CD4-positive, alpha-beta memory T cell (primary cell): ENCODE measurements at regions of chr12 and their contacts with region 1.

Region 1: GRCh38 chr12:110012137-110012536 is 12.9 kb downstream of the ANKRD13A start:
- DNase-seq: peak in 4 of 5 donors; percentile 35 to 81 (median 44)
- H3K4me3 ChIP-seq: no peak overlapping the region
- H3K4me3 Mint-ChIP-seq: peak overlapping the region; percentile 2 to 89 (median 72)
- H3K27ac ChIP-seq: peak overlapping the region; percentile 43
- H3K27ac Mint-ChIP-seq: peak overlapping the region; percentile 79 to 97 (median 94)
- H3K4me1 ChIP-seq: peaks cover 68% of the 10 kb centered on the region
- H3K4me1 Mint-ChIP-seq: peaks cover 44 to 69% (median 56%) of the 10 kb centered on the region in 4 donors
- H3K27me3 ChIP-seq: no peaks in the 10 kb centered on the region
- H3K27me3 Mint-ChIP-seq: no peaks in the 10 kb centered on the region

Region 2: GRCh38 chr12:109899783-109900751 is 112.1 kb before region 1 on chr12 and contains the start of gene TCHP:
- CTCF ChIA-PET with region 1: no interaction called
- POLR2A ChIA-PET with region 1: no interaction called
- intact Hi-C with region 1: loop called (anchors 1 kb)
- DNase-seq: peak; percentile 76 to 83 (median 80)
- H3K4me3 ChIP-seq: peak within 1 kb of the TSS; percentile 72 to 87
- H3K4me3 Mint-ChIP-seq: peak within 1 kb of the TSS; percentile 90 to 99 (median 94)
- H3K27ac ChIP-seq: peak within 1 kb of the TSS; percentile 70
- H3K27ac Mint-ChIP-seq: peak within 1 kb of the TSS; percentile 85 to 99 (median 97)
- H3K4me1 ChIP-seq: peaks cover 22% of the 10 kb centered on the region
- H3K4me1 Mint-ChIP-seq: peaks cover 14 to 37% (median 23%) of the 10 kb centered on the region in 4 donors
- H3K27me3 ChIP-seq: no peaks in the 10 kb centered on the region
- H3K27me3 Mint-ChIP-seq: no peaks in the 10 kb centered on the region
- total RNA-seq, gene TCHP: 41.4 to 45.0 TPM

Region 3: GRCh38 chr12:109934026-109934425 is 78.1 kb before region 1 on chr12:
- CTCF ChIA-PET with region 1: interaction called, 4 read pairs
- POLR2A ChIA-PET with region 1: no interaction called
- intact Hi-C with region 1: loop called (anchors 1 kb)
- DNase-seq: peak in 2 of 5 donors; percentile 8 to 12
- H3K4me3 ChIP-seq: no peak overlapping the region
- H3K4me3 Mint-ChIP-seq: no peak overlapping the region
- H3K27ac ChIP-seq: no peak overlapping the region
- H3K27ac Mint-ChIP-seq: peak overlapping the region in 4 of 7 donors; percentile 27 to 69 (median 66)
- H3K4me1 ChIP-seq: no peaks in the 10 kb centered on the region
- H3K4me1 Mint-ChIP-seq: peaks cover 0 to 5% (median 1%) of the 10 kb centered on the region in 4 donors
- H3K27me3 ChIP-seq: no peaks in the 10 kb centered on the region
- H3K27me3 Mint-ChIP-seq: no peaks in the 10 kb centered on the region

Region 4: DNA sequence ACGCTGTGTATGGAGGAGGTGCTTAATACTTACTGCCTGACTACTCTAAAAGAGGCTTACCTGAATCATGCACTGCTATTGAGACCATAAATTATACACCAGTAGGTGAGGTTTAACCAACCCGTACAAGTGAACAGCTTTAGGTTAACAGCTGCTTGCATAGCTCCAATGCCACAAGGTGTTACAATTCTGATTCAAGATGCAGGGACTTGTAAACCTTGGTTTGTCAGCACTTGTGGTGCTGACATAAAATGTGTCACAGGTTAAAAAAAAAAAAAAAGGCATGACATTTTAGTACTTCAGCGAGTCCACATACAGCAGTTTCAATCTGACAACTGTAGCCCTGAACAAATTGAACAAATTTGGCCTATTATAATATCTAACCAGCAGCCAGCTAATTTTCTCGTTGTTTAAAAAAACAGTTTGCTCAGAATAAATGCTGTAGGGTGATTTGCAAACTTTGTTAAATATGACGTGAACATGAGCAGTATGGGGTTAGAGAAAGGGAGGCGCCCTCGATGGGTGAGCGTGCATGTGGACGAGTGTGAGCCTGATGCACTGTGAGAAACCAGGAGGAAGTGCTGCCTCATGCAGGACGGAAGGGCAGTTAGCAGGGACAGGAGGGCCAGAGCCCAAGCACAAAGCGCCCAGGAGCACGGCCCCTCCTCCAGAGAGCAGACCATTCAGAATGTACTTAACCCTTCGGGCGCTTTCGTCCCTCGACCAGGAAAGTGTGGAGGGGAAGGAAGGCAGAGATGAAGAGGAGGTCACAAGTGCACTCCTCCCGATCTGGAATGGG is 67.4 kb before region 1 on chr12:
- CTCF ChIA-PET with region 1: no interaction called
- POLR2A ChIA-PET with region 1: no interaction called
- intact Hi-C with region 1: loop called (anchors 5 kb)
- DNase-seq: no peak
- H3K4me3 ChIP-seq: no peak overlapping the region
- H3K4me3 Mint-ChIP-seq: no peak overlapping the region
- H3K27ac ChIP-seq: no peak overlapping the region
- H3K27ac Mint-ChIP-seq: peak overlapping the region in 1 of 7 donors; percentile 25
- H3K4me1 ChIP-seq: peaks cover 26% of the 10 kb centered on the region
- H3K4me1 Mint-ChIP-seq: peaks cover 22 to 27% (median 24%) of the 10 kb centered on the region in 4 donors
- H3K27me3 ChIP-seq: no peaks in the 10 kb centered on the region
- H3K27me3 Mint-ChIP-seq: no peaks in the 10 kb centered on the region

Region 5: GRCh38 chr12:110056147-110056484 is 44.0 kb after region 1 on chr12:
- CTCF ChIA-PET with region 1: no interaction called
- POLR2A ChIA-PET with region 1: no interaction called
- intact Hi-C with region 1: no loop called
- DNase-seq: no peak
- H3K4me3 ChIP-seq: no peak overlapping the region
- H3K4me3 Mint-ChIP-seq: no peak overlapping the region
- H3K27ac ChIP-seq: no peak overlapping the region
- H3K27ac Mint-ChIP-seq: no peak overlapping the region
- H3K4me1 ChIP-seq: no peaks in the 10 kb centered on the region
- H3K4me1 Mint-ChIP-seq: peaks cover 0 to 4% (median under 1%) of the 10 kb centered on the region in 4 donors
- H3K27me3 ChIP-seq: no peaks in the 10 kb centered on the region
- H3K27me3 Mint-ChIP-seq: no peaks in the 10 kb centered on the region